ENCODE measurements at regions of chr6 and their contacts with region 1.

Region 1: GRCh38 chr6:46781478-46782378 is 11.5 kb upstream of the MEP1A start:
- DNase-seq: no peak
- ATAC-seq: peak in 2 of 4 donors; percentile 42 to 63
- H3K4me3 ChIP-seq: no peak overlapping the region
- H3K27ac ChIP-seq: no peak overlapping the region
- H3K4me1 ChIP-seq: no peaks in the 10 kb centered on the region
- H3K27me3 ChIP-seq: no peaks in the 10 kb centered on the region
- CTCF ChIP-seq: peak; percentile 70

Region 2: GRCh38 chr6:46419576-46420002 is 362.1 kb before region 1 on chr6:
- intact Hi-C with region 1: loop called in 1 of 2 experiments (anchors 10 kb)
- DNase-seq: no peak
- ATAC-seq: peak; percentile 57 to 85 (median 70)
- H3K4me3 ChIP-seq: no peak overlapping the region
- H3K27ac ChIP-seq: no peak overlapping the region
- H3K4me1 ChIP-seq: peaks cover 11% of the 10 kb centered on the region
- H3K27me3 ChIP-seq: no peaks in the 10 kb centered on the region
- CTCF ChIP-seq: peak; percentile 82

Region 3: GRCh38 chr6:46704562-46704961 is 77.2 kb before region 1 on chr6:
- intact Hi-C with region 1: loop called in 1 of 2 experiments (anchors 2 kb)
- DNase-seq: no peak
- ATAC-seq: no peak
- H3K4me3 ChIP-seq: no peak overlapping the region
- H3K27ac ChIP-seq: no peak overlapping the region
- H3K4me1 ChIP-seq: no peaks in the 10 kb centered on the region
- H3K27me3 ChIP-seq: no peaks in the 10 kb centered on the region
- CTCF ChIP-seq: peak; percentile 23

Region 4: DNA sequence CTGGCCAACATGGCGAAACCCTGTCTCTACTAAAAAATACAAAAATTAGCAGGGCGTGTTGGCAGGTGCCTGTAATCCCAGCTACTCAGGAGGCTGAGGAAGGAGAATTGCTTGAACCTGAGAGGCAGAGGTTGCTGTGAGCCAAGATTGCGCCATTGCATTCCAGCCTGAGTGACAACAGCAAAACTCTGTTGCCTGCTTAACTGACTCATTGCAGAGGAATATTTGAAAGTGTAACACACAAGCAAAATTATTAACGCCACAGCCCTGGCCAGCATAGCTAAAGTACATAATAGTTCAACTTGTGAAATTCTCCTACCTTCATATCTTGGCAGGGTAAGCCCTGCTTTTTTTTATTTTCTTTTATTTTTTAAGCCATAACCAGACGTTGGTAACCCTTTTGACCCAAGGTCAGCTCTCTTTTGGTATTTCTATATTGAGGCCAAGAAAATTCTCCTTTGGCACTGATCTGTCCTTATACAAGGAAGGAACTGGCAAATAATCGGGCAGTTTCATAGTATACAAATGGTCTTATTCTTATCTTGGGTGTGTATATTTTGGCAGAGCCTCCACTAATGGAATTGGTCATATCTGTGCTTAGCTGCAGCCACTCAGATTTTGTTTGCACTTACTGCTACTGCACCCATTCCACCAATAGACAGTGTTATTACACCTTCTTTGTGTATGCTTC is 144.0 kb after region 1 on chr6:
- intact Hi-C with region 1: no loop called
- DNase-seq: peak in 1 of 2 donors; percentile 38
- ATAC-seq: peak in 3 of 4 donors; percentile 54 to 80 (median 68)
- H3K4me3 ChIP-seq: no peak overlapping the region
- H3K27ac ChIP-seq: no peak overlapping the region
- H3K4me1 ChIP-seq: no peaks in the 10 kb centered on the region
- H3K27me3 ChIP-seq: no peaks in the 10 kb centered on the region
- CTCF ChIP-seq: no peak

Measured in psoas muscle (tissue), 8 donors.